A549 (cell line): ENCODE measurements at regions of chr1 and their contacts with region 1.

Region 1: DNA sequence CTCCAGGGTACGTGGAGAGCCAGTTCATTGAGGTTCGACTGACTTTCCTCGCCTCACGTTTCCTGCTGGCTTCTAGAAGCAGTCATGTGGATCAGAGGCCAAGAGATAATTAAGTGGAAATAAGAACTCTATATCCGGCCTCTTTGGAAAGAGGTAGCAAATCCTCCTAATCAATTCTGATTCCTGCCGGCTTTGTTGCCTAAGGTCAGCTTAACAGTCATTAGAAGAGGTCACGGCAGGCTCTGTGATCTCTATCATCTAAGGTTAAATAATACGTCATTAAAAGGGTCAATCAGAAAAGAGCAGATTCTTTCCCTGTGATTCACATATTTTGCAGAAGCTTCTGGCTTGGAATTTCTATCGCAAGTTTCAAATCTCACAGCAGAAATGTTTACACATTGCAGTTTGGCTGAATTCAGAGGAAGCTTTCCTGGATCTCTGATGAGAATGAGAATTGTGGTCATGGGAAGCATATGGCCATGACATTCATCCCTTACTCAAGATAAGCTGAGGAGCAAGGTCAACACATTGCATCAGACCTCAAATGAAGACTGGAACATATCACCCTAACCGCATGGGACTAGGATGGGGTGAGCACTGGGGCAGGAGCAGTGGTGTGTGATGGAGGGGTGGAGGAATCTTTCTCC is 189.4 kb downstream of the PBX1 start:
- DNase-seq: peak; percentile 44 to 98
- ATAC-seq: peak; percentile 92
- H3K4me3 ChIP-seq: no peak overlapping the region
- H3K27ac ChIP-seq: peak overlapping the region; percentile 86 to 90
- H3K4me1 ChIP-seq: peaks cover 76% of the 10 kb centered on the region
- CTCF ChIP-seq: no peak
- EP300 ChIP-seq: peak; percentile 98 to 100
- POLR2A ChIP-seq: no peak
- RAD21 ChIP-seq: peak; percentile 29 to 76; a peak in 4 of 5 replicates

Region 2: DNA sequence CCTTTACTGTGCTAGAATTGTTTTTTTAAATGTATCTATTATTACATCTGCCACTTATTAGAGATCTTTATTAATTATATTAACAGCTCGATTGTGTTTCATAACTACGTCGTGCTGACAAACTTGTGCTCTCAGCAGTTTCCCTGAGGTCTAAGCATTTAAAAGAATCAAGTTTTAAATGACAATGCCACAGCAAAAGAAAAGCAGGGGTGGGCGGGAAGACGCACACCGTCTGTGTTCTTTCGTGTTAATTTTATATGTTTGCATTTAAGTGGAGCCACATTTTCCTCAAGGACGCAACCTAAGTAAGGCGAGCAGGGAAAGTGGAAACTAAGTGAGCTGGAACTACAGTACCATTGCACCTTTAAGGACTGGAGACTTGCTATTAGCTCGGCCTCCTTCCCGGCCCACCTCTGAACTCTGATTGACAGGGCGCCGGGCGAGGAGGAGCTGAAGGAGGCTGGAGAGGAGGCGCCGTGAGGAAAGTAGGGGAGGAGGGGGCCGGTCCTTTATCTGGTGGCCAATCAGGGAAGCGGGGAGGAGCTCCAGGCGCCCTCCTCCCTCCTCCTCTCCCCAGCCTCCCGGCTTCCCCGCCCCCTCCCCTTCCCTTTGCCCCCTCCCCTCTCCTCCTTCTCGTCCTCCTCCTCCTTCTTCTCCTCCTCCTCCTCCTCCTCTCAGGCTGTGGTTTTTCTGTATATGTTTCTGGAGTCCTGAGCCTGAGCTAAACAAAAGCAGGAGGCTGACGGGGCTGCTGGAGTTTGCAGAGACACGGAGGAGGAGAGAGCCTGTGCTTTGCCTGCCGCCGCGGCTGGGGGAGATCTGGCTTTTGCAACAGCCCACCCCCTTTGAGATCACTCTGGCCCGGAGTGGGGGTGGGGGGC is 189.7 kb before region 1 on chr1 and contains the start of gene PBX1:
- CTCF ChIA-PET with region 1: no interaction called
- POLR2A ChIA-PET with region 1: interaction called, 10 read pairs
- DNase-seq: peak; percentile 93 to 97
- ATAC-seq: peak; percentile 98 to 99
- H3K4me3 ChIP-seq: peak within 1 kb of the TSS; percentile 59
- H3K27ac ChIP-seq: peak within 1 kb of the TSS; percentile 81 to 91
- H3K4me1 ChIP-seq: peaks cover 12% of the 10 kb centered on the region
- CTCF ChIP-seq: no peak
- EP300 ChIP-seq: peak in 1 of 2 experiments; percentile 48; a peak in 2 of 5 replicates
- POLR2A ChIP-seq: peak; percentile 64
- RAD21 ChIP-seq: no peak
- polyA plus RNA-seq, gene PBX1: 61.5 and 62.8 TPM in 2 replicates

Region 3: GRCh38 chr1:164765557-164765956 is 17.2 kb after region 1 on chr1:
- CTCF ChIA-PET with region 1: interaction called, 8 read pairs
- POLR2A ChIA-PET with region 1: interaction called, 10 read pairs
- DNase-seq: peak; percentile 51 to 72
- ATAC-seq: peak; percentile 77 to 80
- H3K4me3 ChIP-seq: no peak overlapping the region
- H3K27ac ChIP-seq: peak overlapping the region; percentile 90 to 94
- H3K4me1 ChIP-seq: peaks cover 74% of the 10 kb centered on the region
- CTCF ChIP-seq: no peak
- EP300 ChIP-seq: no peak
- POLR2A ChIP-seq: no peak
- RAD21 ChIP-seq: no peak

Region 4: GRCh38 chr1:164813776-164814175 is 65.4 kb after region 1 on chr1:
- CTCF ChIA-PET with region 1: no interaction called
- POLR2A ChIA-PET with region 1: no interaction called
- DNase-seq: no peak
- ATAC-seq: no peak
- H3K4me3 ChIP-seq: no peak overlapping the region
- H3K27ac ChIP-seq: no peak overlapping the region
- H3K4me1 ChIP-seq: no peaks in the 10 kb centered on the region
- CTCF ChIP-seq: no peak
- EP300 ChIP-seq: no peak
- POLR2A ChIP-seq: no peak
- RAD21 ChIP-seq: no peak